ENCODE measurements at regions of chr2 and their contacts with region 1.

Region 1: GRCh38 chr2:206392118-206392517 is 51.2 kb upstream of the ADAM23 start:
- DNase-seq: no peak
- ATAC-seq: peak in 3 of 4 donors; percentile 49 to 63 (median 58)
- H3K4me3 ChIP-seq: no peak overlapping the region
- H3K27ac ChIP-seq: no peak overlapping the region
- H3K4me1 ChIP-seq: no peaks in the 10 kb centered on the region
- H3K27me3 ChIP-seq: no peaks in the 10 kb centered on the region
- CTCF ChIP-seq: peak; percentile 39 to 61 (median 48)
- POLR2A ChIP-seq: no peak

Region 2: DNA sequence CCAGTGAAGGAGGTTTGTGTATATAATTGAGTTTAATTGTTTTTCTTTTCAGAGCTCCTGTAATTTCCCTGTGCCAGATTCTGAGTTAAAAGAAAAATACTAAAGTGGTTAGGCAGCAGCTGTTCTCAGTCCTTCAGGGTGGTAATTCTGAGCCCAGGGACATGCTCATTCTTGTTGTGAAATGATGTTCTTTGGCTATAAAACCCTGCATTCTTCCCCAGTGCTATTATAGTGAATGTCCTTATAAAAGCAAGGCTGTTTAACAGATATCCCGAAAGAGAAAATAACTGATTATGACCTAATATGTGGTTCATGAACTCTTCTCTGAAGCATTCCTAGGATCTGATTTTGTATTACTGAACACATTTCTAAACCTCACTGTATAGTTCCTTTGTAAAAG is 85.2 kb after region 1 on chr2:
- intact Hi-C with region 1: no loop called
- DNase-seq: no peak
- ATAC-seq: peak in 2 of 4 donors; percentile 49 to 61
- H3K4me3 ChIP-seq: no peak overlapping the region
- H3K27ac ChIP-seq: no peak overlapping the region
- H3K4me1 ChIP-seq: peaks cover 0 to 12% (median 2%) of the 10 kb centered on the region in 12 donors
- H3K27me3 ChIP-seq: peaks cover 0 to 4% (median 0%) of the 10 kb centered on the region in 9 donors
- CTCF ChIP-seq: no peak
- POLR2A ChIP-seq: no peak

Region 3: GRCh38 chr2:206521612-206522011 is 129.5 kb after region 1 on chr2:
- intact Hi-C with region 1: loop called in 2 of 10 experiments (anchors 10 kb)
- DNase-seq: no peak
- ATAC-seq: no peak
- H3K4me3 ChIP-seq: no peak overlapping the region
- H3K27ac ChIP-seq: no peak overlapping the region
- H3K4me1 ChIP-seq: peaks cover 0 to 7% (median 0%) of the 10 kb centered on the region in 12 donors
- H3K27me3 ChIP-seq: no peaks in the 10 kb centered on the region
- CTCF ChIP-seq: no peak
- POLR2A ChIP-seq: no peak

Region 4: DNA sequence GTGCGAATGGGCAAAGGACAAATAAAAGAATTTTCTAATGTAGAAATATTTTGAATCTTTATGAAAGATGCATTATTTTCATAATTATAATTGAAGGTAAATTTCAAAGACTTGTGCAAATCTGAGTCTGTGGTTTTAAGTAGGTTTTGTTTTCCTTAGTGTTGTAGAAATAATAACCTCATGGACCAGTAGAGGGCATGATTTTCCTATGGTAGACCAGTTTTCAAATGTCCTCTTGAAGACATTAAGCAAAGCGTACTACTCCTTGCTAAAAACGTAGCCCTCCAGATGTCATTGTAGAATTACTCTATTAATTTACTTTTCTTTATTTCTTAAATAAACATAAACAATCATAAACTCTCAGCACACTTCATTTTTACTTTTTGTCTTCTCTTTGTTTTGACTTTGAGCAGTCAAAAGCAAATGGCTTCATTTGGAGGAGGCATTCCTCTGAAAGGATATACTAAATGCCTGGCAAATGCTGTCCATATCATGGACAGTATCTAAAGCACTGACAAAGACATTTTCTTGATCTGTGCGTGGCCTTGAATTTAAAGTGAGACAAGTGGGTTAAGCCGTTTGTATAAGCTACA is 164.3 kb after region 1 on chr2:
- intact Hi-C with region 1: loop called in 7 of 10 experiments (anchors 2 to 10 kb)
- DNase-seq: no peak
- ATAC-seq: peak in 1 of 4 donors; percentile 59
- H3K4me3 ChIP-seq: no peak overlapping the region
- H3K27ac ChIP-seq: no peak overlapping the region
- H3K4me1 ChIP-seq: no peaks in the 10 kb centered on the region
- H3K27me3 ChIP-seq: no peaks in the 10 kb centered on the region
- CTCF ChIP-seq: peak; percentile 28 to 61 (median 46)
- POLR2A ChIP-seq: no peak

Region 5: DNA sequence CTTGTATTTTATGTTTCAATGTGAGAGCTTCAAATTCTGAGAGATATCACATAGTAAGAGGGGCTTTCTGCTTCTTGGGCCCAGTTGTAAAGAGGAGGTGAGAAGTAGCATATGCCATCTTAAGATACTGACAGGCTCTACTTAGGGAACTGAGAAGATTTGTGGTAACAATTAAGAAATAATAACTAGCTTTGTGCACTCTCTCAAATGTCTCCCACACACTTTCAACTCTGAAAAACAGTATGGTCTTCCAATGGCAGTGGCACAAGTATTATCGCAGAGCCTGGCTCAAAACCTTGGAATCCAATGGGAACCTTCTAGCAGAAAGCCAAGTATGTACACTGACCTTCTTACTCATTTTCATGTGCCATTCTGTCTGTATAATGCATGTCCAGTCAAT is 169.8 kb after region 1 on chr2:
- intact Hi-C with region 1: loop called in 7 of 10 experiments (anchors 2 to 10 kb)
- DNase-seq: no peak
- ATAC-seq: no peak
- H3K4me3 ChIP-seq: no peak overlapping the region
- H3K27ac ChIP-seq: no peak overlapping the region
- H3K4me1 ChIP-seq: no peaks in the 10 kb centered on the region
- H3K27me3 ChIP-seq: no peaks in the 10 kb centered on the region
- CTCF ChIP-seq: no peak
- POLR2A ChIP-seq: no peak

Region 6: GRCh38 chr2:206693399-206694137 is 301.4 kb after region 1 on chr2:
- intact Hi-C with region 1: loop called in 1 of 10 experiments (anchors 10 kb)
- DNase-seq: no peak
- ATAC-seq: peak in 3 of 4 donors; percentile 60 to 74 (median 67)
- H3K4me3 ChIP-seq: no peak overlapping the region
- H3K27ac ChIP-seq: no peak overlapping the region
- H3K4me1 ChIP-seq: no peaks in the 10 kb centered on the region
- H3K27me3 ChIP-seq: peaks cover 0 to 5% (median 0%) of the 10 kb centered on the region in 9 donors
- CTCF ChIP-seq: peak; percentile 48 to 78 (median 62)
- POLR2A ChIP-seq: no peak

Region 7: GRCh38 chr2:206765242-206766056 is 373.3 kb after region 1 on chr2 and contains the starts of genes FASTKD2 and MDH1B:
- intact Hi-C with region 1: loop called in 1 of 10 experiments (anchors 10 kb)
- DNase-seq: peak; percentile 85 to 93 (median 91)
- ATAC-seq: peak; percentile 96 to 99 (median 98)
- H3K4me3 ChIP-seq: peak within 1 kb of the TSS; percentile 68 to 97 (median 84)
- H3K27ac ChIP-seq: peak within 1 kb of the TSS; percentile 82 to 95 (median 89)
- H3K4me1 ChIP-seq: peaks cover 3 to 43% (median 35%) of the 10 kb centered on the region in 12 donors
- H3K27me3 ChIP-seq: peaks cover 0 to 3% (median 0%) of the 10 kb centered on the region in 9 donors
- CTCF ChIP-seq: no peak
- POLR2A ChIP-seq: no peak
- total RNA-seq, gene FASTKD2: 32.6 to 48.0 (median 42.4) TPM
- total RNA-seq, gene MDH1B: 0.30 to 2.0 (median 1.1) TPM

Region 8: GRCh38 chr2:206783718-206784117 is 391.6 kb after region 1 on chr2:
- intact Hi-C with region 1: loop called in 1 of 10 experiments (anchors 5 kb)
- DNase-seq: no peak
- ATAC-seq: peak in 1 of 4 donors; percentile 51
- H3K4me3 ChIP-seq: no peak overlapping the region
- H3K27ac ChIP-seq: no peak overlapping the region
- H3K4me1 ChIP-seq: no peaks in the 10 kb centered on the region
- H3K27me3 ChIP-seq: no peaks in the 10 kb centered on the region
- CTCF ChIP-seq: peak in 10 of 12 donors; percentile 11 to 54 (median 32)
- POLR2A ChIP-seq: no peak